ENCODE measurements at regions of chr3 and their contacts with region 1.

Region 1: GRCh38 chr3:5026331-5027218 is 47.3 kb downstream of the BHLHE40 start:
- DNase-seq: peak; percentile 82 to 96
- H3K4me3 ChIP-seq: no peak overlapping the region
- CTCF ChIP-seq: peak in 1 of 3 donors; percentile 7
- POLR2A ChIP-seq: no peak

Region 2: DNA sequence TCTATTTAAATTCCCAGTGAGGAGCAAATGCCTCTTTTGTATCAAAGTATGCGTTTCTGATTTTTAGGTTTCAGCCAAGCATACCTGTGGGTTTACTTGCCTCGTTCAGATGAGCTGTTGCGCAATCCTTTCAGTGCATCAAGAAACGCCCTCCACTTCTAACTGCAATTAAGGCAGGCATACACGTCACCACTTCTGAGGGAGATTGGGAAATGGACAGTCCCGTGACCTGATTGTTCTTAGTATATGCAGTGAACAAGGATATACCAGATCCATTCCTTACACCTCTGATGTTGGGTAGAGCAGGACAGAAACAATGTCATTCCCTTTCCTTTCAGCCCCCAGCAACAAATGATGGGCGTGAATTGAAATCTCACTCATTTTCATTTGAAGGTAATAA is 314.4 kb before region 1 on chr3:
- intact Hi-C with region 1: loop called (anchors 10 kb)
- DNase-seq: peak in 1 of 2 donors; percentile 73
- H3K4me3 ChIP-seq: no peak overlapping the region
- CTCF ChIP-seq: no peak
- POLR2A ChIP-seq: no peak

Region 3: GRCh38 chr3:4978204-4978965 is 48.2 kb before region 1 on chr3:
- intact Hi-C with region 1: loop called (anchors 5 kb)
- DNase-seq: peak; percentile 96 to 99
- H3K4me3 ChIP-seq: peak overlapping the region; percentile 33
- CTCF ChIP-seq: no peak
- POLR2A ChIP-seq: no peak

Region 4: DNA sequence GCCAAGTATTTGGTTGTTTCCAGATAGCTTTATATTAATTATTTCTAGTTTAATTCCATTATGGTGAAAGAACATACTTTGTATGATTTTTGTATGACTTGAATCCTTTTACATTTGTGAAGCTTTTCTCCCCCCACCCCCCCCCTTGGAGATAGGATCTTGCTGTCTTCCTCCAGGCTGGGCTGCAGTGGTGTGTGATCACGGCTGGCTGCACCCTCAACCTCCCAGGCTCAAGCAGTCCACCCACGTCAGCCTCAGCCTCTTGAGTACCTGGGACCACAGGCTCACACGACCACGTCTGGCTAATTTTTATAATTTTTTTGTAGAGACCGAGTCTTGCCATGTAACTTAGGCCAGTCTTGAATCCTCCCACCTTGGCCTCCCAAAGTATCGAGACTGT is 125.0 kb after region 1 on chr3:
- intact Hi-C with region 1: no loop called
- DNase-seq: no peak
- H3K4me3 ChIP-seq: no peak overlapping the region
- CTCF ChIP-seq: no peak
- POLR2A ChIP-seq: no peak

Region 5: DNA sequence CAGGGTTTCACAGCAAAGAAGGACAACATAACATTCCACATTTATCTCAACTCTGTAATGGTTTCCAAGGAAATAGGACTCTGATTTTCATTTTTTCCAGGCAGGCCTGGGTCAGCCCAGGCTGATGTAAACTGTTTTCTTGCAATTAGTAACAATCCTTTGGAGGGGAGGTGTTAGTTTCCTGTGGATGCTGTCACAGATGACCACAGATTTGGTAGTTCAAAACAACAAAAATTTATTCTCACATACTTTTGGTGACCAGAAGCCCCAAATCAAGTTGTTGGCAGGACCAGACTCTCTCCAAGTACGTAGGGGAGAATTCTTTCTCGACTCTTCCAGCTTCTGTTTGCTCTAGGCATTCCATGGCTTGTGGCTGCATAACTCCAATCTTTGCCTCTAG is 249.0 kb after region 1 on chr3:
- intact Hi-C with region 1: no loop called
- DNase-seq: no peak
- H3K4me3 ChIP-seq: no peak overlapping the region
- CTCF ChIP-seq: no peak
- POLR2A ChIP-seq: no peak

Region 6: DNA sequence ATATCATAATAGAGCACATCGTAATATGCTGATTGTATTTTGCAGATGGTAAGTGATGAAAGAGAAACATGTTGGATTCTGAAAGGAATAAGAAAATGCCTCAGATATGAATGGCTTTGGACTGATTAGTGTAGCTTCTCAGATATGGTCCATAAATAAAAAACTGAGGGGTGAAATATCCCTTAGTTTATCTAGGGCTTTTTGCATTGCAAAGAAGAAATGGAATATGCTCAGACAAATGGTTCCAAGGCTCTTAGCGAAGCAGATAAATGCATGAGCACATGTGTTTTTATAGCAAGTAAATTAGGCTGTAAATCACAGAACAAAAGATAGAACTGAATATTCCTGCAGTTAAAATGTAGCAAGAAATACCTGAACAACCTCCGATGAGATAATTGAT is 1013.4 kb after region 1 on chr3:
- intact Hi-C with region 1: no loop called
- DNase-seq: no peak
- H3K4me3 ChIP-seq: no peak overlapping the region
- CTCF ChIP-seq: no peak
- POLR2A ChIP-seq: no peak